Uterus (tissue), 4 donors: ENCODE measurements at regions of chr17 and their contacts with region 1.

Region 1: DNA sequence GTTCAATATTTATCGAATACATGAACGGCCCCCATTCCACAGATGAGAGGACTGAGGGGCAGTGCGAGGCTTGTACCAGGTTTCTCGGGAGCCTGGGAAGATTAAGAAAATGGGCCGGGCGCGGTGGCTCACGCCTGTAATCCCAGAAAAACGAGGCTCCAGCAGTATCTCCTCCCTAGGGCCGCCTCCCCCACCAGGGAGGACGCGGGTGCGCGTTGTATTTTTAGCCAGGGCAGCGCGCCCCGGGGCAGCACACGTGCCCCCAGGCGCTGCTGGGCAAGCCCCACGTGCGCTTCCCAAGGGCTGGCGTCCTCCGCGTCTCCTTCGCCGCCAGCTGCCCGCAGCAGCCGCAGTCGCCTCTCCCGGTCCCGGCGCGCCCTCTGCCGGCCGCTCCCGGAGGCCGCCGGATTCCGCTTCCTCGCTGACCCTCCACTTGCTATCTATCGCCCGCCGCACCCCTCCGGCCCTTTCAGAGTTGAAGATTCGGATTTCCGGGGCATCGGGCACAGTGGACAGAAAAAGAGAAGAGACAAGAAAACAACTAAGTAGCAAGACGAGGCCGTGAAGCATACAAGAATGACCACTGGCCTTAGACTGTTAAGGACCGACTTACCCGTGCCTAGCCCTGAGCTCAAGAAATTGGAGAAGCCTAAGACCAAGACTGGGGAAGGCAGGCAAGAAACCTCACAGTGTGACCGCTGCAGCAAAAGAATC is 1.9 kb upstream of the YBX2 start:
- DNase-seq: peak; percentile 78 to 84
- H3K4me3 ChIP-seq: no peak overlapping the region
- H3K27ac ChIP-seq: peak overlapping the region; percentile 33 to 67
- H3K4me1 ChIP-seq: peaks cover 0 to 27% of the 10 kb centered on the region in 2 donors
- H3K27me3 ChIP-seq: peaks cover 0 to 6% of the 10 kb centered on the region in 2 donors
- CTCF ChIP-seq: peak; percentile 94 to 98 (median 98)
- POLR2A ChIP-seq: peak in 1 of 2 donors; percentile 30

Region 2: DNA sequence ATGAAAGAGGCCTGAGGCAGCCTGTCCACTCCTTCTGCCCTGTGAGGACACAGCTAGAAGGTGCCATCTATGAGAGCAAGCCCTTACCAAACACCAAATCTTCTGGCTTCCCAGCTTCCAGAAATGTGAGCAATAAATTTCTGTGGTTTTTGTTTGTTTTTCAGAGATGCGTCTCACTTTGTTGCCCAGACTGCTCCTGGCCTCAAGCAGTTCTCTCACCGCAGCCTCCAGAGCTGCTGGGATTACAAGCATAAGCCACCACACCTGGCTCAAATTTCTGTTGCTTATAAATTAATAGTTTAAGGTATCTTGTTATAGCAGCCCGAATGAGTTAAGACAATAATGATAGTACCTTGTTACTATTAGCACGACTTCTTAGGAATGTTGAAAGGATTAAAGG is 240.0 kb before region 1 on chr17:
- intact Hi-C with region 1: loop called (anchors 10 kb)
- DNase-seq: no peak
- H3K4me3 ChIP-seq: no peak overlapping the region
- H3K27ac ChIP-seq: no peak overlapping the region
- H3K4me1 ChIP-seq: no peaks in the 10 kb centered on the region
- H3K27me3 ChIP-seq: no peaks in the 10 kb centered on the region
- CTCF ChIP-seq: no peak
- POLR2A ChIP-seq: no peak

Region 3: GRCh38 chr17:7252176-7253043 is 43.9 kb before region 1 on chr17 and contains the start of gene ELP5:
- intact Hi-C with region 1: no loop called
- DNase-seq: peak; percentile 94 to 95
- H3K4me3 ChIP-seq: peak within 1 kb of the TSS; percentile 68 to 73
- H3K27ac ChIP-seq: peak within 1 kb of the TSS; percentile 97 to 98
- H3K4me1 ChIP-seq: peaks cover 0 to 21% of the 10 kb centered on the region in 2 donors
- H3K27me3 ChIP-seq: no peaks in the 10 kb centered on the region
- CTCF ChIP-seq: peak; percentile 34 to 41 (median 37)
- POLR2A ChIP-seq: peak; percentile 44 to 65
- total RNA-seq, gene ELP5: 41.9 to 65.6 (median 51.3) TPM

Region 4: GRCh38 chr17:7280519-7281429 is 15.6 kb before region 1 on chr17:
- intact Hi-C with region 1: loop called (anchors 2 kb)
- DNase-seq: peak; percentile 77 to 87
- H3K4me3 ChIP-seq: peak overlapping the region; percentile 34 to 42
- H3K27ac ChIP-seq: peak overlapping the region; percentile 75 to 90
- H3K4me1 ChIP-seq: peaks cover 0 to 16% of the 10 kb centered on the region in 2 donors
- H3K27me3 ChIP-seq: no peaks in the 10 kb centered on the region
- CTCF ChIP-seq: peak; percentile 94 to 98 (median 96)
- POLR2A ChIP-seq: no peak

Region 5: DNA sequence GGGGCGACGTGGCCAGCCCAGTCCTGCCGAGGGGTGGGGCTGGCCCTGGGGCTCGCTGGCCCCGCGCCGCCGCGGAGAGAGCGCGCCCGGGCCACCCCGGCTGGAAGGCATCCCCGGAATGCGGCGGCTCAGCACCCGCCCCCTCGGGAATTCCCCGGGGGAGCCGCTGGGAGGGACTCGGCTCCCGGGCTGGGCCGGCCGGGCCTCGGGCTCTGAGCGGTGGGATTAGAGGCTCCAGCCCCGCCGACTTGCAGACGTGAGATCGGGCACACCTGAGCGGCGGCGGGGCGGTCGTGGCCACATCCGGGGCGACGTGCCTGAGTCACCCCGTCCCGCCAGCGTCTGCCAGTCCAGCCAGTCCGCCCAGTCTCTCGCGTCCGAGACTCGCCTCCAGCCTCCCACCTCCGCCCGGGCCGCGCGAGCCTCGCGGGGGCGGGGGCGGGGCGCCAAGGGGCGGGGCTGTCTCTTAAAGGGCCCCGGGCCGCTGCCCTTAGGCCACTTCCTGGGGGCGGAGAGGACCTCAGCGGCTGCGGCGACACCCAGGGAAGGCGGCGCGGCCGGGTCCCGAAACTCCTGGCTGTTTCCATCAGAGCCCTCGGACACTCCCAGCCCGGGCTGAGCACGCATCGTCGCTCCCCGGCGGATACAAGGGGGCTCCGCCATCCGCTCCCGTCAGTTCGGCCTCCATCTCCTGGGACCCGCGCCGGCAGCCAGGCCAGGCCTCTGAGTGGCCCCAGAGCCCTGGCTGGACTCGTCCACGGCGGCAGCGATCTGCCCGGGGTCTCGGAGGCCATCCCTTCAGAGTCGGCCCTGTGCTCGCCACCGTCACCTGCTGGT is 55.5 kb after region 1 on chr17 and contains the start of gene KCTD11:
- intact Hi-C with region 1: no loop called
- DNase-seq: peak; percentile 88 to 93
- H3K4me3 ChIP-seq: peak within 1 kb of the TSS; percentile 76 to 97
- H3K27ac ChIP-seq: peak within 1 kb of the TSS; percentile 95 to 97
- H3K4me1 ChIP-seq: peaks cover 0 to 8% of the 10 kb centered on the region in 2 donors
- H3K27me3 ChIP-seq: no peaks in the 10 kb centered on the region
- CTCF ChIP-seq: peak in 2 of 4 experiments; percentile 41 to 55
- POLR2A ChIP-seq: peak; percentile 19 to 65
- total RNA-seq, gene KCTD11: 2.6 to 14.7 (median 7.2) TPM